Body of pancreas (tissue), 4 donors: ENCODE measurements at regions of chr7 and their contacts with region 1.

Region 1: GRCh38 chr7:2209146-2209960 is 23.4 kb downstream of the MAD1L1 start:
- DNase-seq: peak; percentile 40 to 63 (median 46)
- ATAC-seq: peak; percentile 33
- H3K4me3 ChIP-seq: no peak overlapping the region
- H3K27ac ChIP-seq: no peak overlapping the region
- H3K4me1 ChIP-seq: no peaks in the 10 kb centered on the region
- H3K27me3 ChIP-seq: no peaks in the 10 kb centered on the region
- CTCF ChIP-seq: peak in 6 of 7 experiments; percentile 22 to 52 (median 44)
- POLR2A ChIP-seq: no peak

Region 2: DNA sequence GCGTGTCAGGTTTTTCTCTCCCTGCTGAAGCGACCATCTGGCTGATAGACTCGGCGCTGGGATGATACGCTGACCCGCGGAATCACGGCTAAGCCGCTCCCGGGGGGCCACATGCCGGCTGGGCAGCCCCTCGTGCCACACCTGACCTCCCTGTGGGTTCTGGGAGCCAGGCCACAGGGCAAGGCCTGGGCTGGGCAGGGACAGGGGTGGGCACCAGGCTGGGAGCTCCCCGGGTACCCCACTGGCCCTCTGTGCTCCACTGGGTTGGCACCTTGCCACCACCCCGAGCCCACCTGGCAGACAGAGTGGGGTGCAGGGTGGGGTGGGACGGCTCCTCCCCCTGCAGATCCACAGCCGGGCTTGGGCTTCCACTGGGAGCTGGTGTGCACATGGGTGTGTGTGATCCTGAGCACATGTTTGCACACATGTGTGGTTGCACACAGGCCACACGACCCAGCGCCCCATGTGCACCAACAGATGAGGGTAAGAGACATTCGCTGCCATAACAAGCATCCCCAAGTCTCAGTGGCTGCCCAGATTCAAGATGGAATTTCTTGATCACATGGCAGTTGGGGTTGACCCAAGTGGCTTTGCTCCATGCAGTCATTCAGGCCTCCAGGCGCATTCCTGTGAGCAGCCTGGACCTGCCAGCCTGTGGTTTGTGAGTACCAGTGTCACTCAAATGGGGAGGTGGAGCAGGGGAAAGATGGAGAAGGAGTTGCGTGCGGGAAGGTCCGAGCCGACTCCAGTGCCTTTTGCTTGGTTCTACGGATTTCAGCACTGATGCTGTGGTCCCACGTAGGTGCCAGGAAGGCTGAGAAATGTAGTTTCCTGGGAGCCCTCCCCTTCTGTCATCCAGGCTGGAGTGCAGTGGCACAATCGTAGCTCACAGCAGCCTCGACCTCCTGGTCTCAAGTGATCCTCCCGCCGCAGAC is 897.0 kb before region 1 on chr7:
- intact Hi-C with region 1: no loop called
- DNase-seq: no peak
- ATAC-seq: no peak
- H3K4me3 ChIP-seq: no peak overlapping the region
- H3K27ac ChIP-seq: no peak overlapping the region
- H3K4me1 ChIP-seq: no peaks in the 10 kb centered on the region
- H3K27me3 ChIP-seq: no peaks in the 10 kb centered on the region
- CTCF ChIP-seq: no peak
- POLR2A ChIP-seq: no peak

Region 3: DNA sequence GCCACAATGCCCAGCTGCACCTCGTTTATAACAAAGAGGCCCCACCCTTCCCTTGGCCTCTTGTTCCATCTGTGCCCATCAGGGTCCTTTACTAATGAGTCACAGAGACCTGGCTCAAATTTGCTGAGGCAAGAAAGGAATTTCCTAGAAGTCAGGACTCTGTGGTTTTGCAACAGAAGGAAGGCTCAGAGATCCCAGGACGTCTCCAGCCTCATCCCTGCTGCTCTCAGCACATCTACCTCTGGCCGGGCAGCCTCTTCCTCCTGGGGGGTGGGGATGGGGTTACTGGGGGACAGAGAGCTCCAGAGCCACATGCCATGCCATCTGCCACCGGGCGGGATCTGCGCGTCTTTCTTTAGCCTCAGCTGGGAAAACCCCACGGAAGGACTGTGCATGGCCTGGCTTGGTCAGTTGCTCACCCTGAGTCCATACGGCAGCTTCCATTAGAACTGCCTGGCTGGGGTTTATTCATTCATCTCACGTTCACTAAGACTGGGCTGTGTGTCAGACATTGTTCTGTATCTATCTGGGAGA is 597.6 kb before region 1 on chr7:
- intact Hi-C with region 1: no loop called
- DNase-seq: no peak
- ATAC-seq: no peak
- H3K4me3 ChIP-seq: no peak overlapping the region
- H3K27ac ChIP-seq: no peak overlapping the region
- H3K4me1 ChIP-seq: no peaks in the 10 kb centered on the region
- H3K27me3 ChIP-seq: peaks cover 0 to 5% of the 10 kb centered on the region in 2 donors
- CTCF ChIP-seq: no peak
- POLR2A ChIP-seq: no peak

Region 4: GRCh38 chr7:1664711-1665548 is 544.4 kb before region 1 on chr7:
- intact Hi-C with region 1: loop called (anchors 10 kb)
- DNase-seq: peak; percentile 53 to 68 (median 59)
- ATAC-seq: peak; percentile 36
- H3K4me3 ChIP-seq: peak overlapping the region in 1 of 2 donors; percentile 30
- H3K27ac ChIP-seq: no peak overlapping the region
- H3K4me1 ChIP-seq: peaks cover 43% of the 10 kb centered on the region
- H3K27me3 ChIP-seq: peaks cover 3 to 29% of the 10 kb centered on the region in 2 donors
- CTCF ChIP-seq: peak; percentile 41 to 75 (median 70)
- POLR2A ChIP-seq: no peak

Region 5: GRCh38 chr7:2109936-2110585 is 99.3 kb before region 1 on chr7:
- intact Hi-C with region 1: no loop called
- DNase-seq: peak in 1 of 4 donors; percentile 25
- ATAC-seq: no peak
- H3K4me3 ChIP-seq: no peak overlapping the region
- H3K27ac ChIP-seq: no peak overlapping the region
- H3K4me1 ChIP-seq: no peaks in the 10 kb centered on the region
- H3K27me3 ChIP-seq: no peaks in the 10 kb centered on the region
- CTCF ChIP-seq: no peak
- POLR2A ChIP-seq: no peak

Region 6: GRCh38 chr7:2266908-2267307 is 57.6 kb after region 1 on chr7:
- intact Hi-C with region 1: no loop called
- DNase-seq: no peak
- ATAC-seq: no peak
- H3K4me3 ChIP-seq: no peak overlapping the region
- H3K27ac ChIP-seq: no peak overlapping the region
- H3K4me1 ChIP-seq: no peaks in the 10 kb centered on the region
- H3K27me3 ChIP-seq: no peaks in the 10 kb centered on the region
- CTCF ChIP-seq: no peak
- POLR2A ChIP-seq: no peak